Breast epithelium (tissue), 4 donors: ENCODE measurements at regions of chr19 and their contacts with region 1.

Region 1: GRCh38 chr19:17950310-17951156 is 16.4 kb upstream of the KCNN1 start:
- DNase-seq: no peak
- H3K4me3 ChIP-seq: peak overlapping the region in 2 of 3 donors; percentile 1 to 23
- H3K27ac ChIP-seq: no peak overlapping the region
- H3K4me1 ChIP-seq: peaks cover 3 to 29% of the 10 kb centered on the region in 2 donors
- H3K27me3 ChIP-seq: peaks cover 15 to 64% of the 10 kb centered on the region in 2 donors
- CTCF ChIP-seq: no peak
- POLR2A ChIP-seq: no peak

Region 2: DNA sequence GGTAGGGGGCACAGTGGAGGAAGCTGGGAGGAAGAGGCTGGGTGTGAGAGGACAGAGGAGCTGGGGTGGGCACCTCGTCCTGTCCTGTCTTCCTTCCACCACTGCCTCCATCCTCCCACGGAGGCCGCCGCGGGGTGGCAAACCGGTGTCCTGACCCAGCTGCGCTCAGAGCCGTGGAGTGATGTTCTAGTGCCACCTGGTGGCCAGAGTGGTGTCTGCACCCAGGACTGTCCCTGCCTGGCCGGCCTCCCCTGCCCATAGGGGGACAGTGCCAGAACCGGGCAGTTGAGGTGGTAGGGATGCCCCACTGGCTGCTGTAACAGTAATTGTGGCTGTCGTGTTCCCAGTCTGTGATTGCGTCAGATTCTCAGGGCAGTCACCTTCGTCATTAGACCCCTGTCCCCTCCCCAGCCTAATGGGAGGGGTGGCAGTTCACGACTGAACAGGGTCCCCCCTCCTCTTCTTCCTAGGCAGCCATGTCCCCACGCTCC is 46.3 kb after region 1 on chr19:
- intact Hi-C with region 1: loop called (anchors 5 kb)
- DNase-seq: peak; percentile 80 to 89
- H3K4me3 ChIP-seq: no peak overlapping the region
- H3K27ac ChIP-seq: no peak overlapping the region
- H3K4me1 ChIP-seq: no peaks in the 10 kb centered on the region
- H3K27me3 ChIP-seq: no peaks in the 10 kb centered on the region
- CTCF ChIP-seq: peak; percentile 92 to 98 (median 98)
- POLR2A ChIP-seq: no peak